Activated T-helper 1 cell treated with anti-CD3 and anti-CD28 coated beads, Interleukin-12 subunit alpha, Interleukin-12 subunit beta, Interleukin-2, Interleukin-4 antibody, amounts not matched to agents 30 ng/mL and 10 ng/mL and 1 ng/mL, durations not matched to agents 14 hours and 24 hours and 36 hours (primary cell): ENCODE measurements at regions of chrX and their contacts with region 1.

Region 1: GRCh38 chrX:45077748-45078424 is 122.8 kb downstream of the DIPK2B start:
- DNase-seq: no peak
- H3K4me3 Mint-ChIP-seq: peak overlapping the region; percentile 45
- H3K27ac Mint-ChIP-seq: peak overlapping the region; percentile 76
- H3K4me1 Mint-ChIP-seq: peaks cover 30% of the 10 kb centered on the region
- H3K27me3 Mint-ChIP-seq: no peaks in the 10 kb centered on the region

Region 2: DNA sequence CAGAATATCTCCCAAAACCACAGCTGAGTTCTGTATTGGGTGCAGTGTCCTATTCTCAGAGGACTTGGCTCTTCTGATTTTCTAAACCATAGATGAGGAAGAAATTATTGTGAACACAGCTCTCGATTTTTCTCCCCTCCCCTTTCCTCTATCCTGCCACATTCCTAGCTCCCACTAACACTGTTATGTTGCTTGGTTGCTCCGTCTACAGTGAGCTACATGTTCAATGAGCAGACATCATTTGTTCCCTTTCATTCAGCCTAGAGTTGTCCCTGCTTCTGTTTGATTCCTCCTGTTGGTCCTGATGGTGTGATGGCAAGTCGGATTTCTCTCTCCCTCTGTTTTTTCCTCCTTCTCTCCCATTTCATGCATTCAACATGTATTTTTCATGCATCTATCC is 56.9 kb after region 1 on chrX:
- intact Hi-C with region 1: loop called (anchors 5 kb)
- DNase-seq: no peak
- H3K4me3 Mint-ChIP-seq: no peak overlapping the region
- H3K27ac Mint-ChIP-seq: no peak overlapping the region
- H3K4me1 Mint-ChIP-seq: no peaks in the 10 kb centered on the region
- H3K27me3 Mint-ChIP-seq: peaks cover 3% of the 10 kb centered on the region

Region 3: DNA sequence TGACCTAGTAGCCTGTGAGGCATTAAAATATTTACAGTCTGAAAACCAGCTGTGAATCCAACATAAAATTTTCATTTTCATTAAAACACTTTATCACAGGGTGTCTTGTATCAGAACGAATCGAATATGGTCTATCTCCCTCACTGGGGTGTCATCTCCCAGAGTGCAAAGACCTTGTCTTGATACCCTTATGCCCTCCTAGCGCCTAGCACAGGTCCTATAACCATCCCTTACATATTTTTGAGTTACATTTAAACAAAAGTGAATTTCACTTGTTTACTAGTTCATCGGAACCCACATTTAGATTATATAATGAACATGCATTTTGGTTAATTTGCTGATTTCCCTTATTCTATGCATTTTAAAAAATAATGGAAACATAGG is 108.7 kb after region 1 on chrX:
- intact Hi-C with region 1: loop called (anchors 5 kb)
- DNase-seq: no peak
- H3K4me3 Mint-ChIP-seq: peak overlapping the region; percentile 87
- H3K27ac Mint-ChIP-seq: peak overlapping the region; percentile 78
- H3K4me1 Mint-ChIP-seq: peaks cover 26% of the 10 kb centered on the region
- H3K27me3 Mint-ChIP-seq: no peaks in the 10 kb centered on the region